ENCODE measurements at regions of chr4 and their contacts with region 1.

Region 1: DNA sequence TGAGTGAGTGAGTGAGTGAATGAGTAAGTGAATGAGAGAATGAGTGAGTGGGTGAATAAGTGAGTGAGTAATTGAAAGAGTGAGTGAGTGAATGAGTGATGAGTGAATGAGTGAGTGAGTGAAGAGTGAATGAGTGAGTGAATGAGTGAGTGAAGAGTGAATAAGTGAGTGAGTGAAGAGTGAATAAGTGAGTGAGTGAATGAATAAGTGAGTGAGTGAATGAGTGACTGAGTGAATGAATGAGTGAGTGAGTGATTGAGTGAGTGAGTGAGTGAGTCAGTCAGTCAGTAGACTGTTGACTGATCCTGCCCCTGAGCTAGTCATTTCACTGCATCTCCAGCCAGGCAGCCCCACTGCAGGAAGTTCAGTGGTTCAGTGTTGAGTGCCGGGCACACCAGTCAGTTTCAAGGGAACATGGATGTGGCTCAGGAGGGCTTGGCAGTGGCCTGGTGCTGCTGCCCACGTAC is 228.4 kb upstream of the PSAPL1 start:
- DNase-seq: no peak
- H3K4me3 ChIP-seq: no peak overlapping the region
- H3K27ac ChIP-seq: no peak overlapping the region
- H3K4me1 ChIP-seq: peaks cover 0 to 6% (median 3%) of the 10 kb centered on the region in 4 experiments; a peak in 4 of 7 replicates
- H3K27me3 ChIP-seq: no peaks in the 10 kb centered on the region
- CTCF ChIP-seq: no peak
- EP300 ChIP-seq: no peak
- POLR2A ChIP-seq: no peak
- RAD21 ChIP-seq: no peak

Region 2: GRCh38 chr4:7638984-7639789 is 23.9 kb before region 1 on chr4:
- CTCF ChIA-PET with region 1: no interaction called
- POLR2A ChIA-PET with region 1: no interaction called
- DNase-seq: no peak
- H3K4me3 ChIP-seq: no peak overlapping the region
- H3K27ac ChIP-seq: no peak overlapping the region
- H3K4me1 ChIP-seq: no peaks in the 10 kb centered on the region
- H3K27me3 ChIP-seq: no peaks in the 10 kb centered on the region
- CTCF ChIP-seq: no peak
- EP300 ChIP-seq: no peak
- POLR2A ChIP-seq: no peak
- RAD21 ChIP-seq: no peak

Region 3: GRCh38 chr4:7649741-7650531 is 13.2 kb before region 1 on chr4:
- CTCF ChIA-PET with region 1: interaction called, 12 read pairs
- POLR2A ChIA-PET with region 1: no interaction called
- DNase-seq: no peak
- H3K4me3 ChIP-seq: no peak overlapping the region
- H3K27ac ChIP-seq: no peak overlapping the region
- H3K4me1 ChIP-seq: peaks cover 0 to 14% (median 12%) of the 10 kb centered on the region in 4 experiments; a peak in 6 of 7 replicates
- H3K27me3 ChIP-seq: no peaks in the 10 kb centered on the region
- CTCF ChIP-seq: no peak
- EP300 ChIP-seq: no peak
- POLR2A ChIP-seq: no peak
- RAD21 ChIP-seq: no peak